ENCODE measurements at regions of chr6 and their contacts with region 1.

Region 1: DNA sequence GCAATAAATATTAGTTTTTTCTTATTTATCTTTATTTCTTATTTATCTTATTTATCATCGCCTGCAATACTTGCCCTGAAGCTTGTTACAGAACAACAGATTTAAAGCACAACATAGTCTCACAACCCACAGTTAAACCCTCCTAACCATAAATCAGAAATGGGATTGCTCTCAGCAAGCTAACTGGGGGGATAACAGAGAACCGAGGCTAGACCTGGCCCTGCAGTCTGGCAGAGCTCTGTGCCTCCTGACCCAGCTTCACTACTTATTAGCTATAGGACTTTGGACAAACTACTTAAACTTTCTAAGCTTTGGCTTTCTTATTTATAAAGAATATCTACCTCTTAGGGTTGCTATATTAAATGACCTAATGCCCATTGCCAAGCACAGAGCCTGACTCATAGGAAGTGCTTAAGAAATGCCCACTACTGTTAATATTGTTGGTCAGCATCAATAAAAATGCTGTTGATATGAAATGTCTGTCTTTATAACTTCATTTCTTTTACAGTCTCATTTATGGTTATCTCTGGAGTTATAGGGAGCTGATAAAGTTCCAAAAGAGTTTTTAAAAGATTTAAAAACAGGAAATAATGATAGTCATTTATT is 87.9 kb upstream of the BEND6 start:
- DNase-seq: no peak
- H3K4me3 Mint-ChIP-seq: no peak overlapping the region
- H3K27ac Mint-ChIP-seq: peak overlapping the region; percentile 64
- H3K4me1 Mint-ChIP-seq: peaks cover 68% of the 10 kb centered on the region
- H3K27me3 Mint-ChIP-seq: no peaks in the 10 kb centered on the region
- CTCF ChIP-seq: no peak

Region 2: GRCh38 chr6:56851541-56852259 is 15.3 kb before region 1 on chr6:
- CTCF ChIA-PET with region 1: interaction called, 11 read pairs
- intact Hi-C with region 1: no loop called
- DNase-seq: peak; percentile 70
- H3K4me3 Mint-ChIP-seq: peak overlapping the region; percentile 97
- H3K27ac Mint-ChIP-seq: peak overlapping the region; percentile 91
- H3K4me1 Mint-ChIP-seq: peaks cover 43% of the 10 kb centered on the region
- H3K27me3 Mint-ChIP-seq: no peaks in the 10 kb centered on the region
- CTCF ChIP-seq: peak; percentile 39

Region 3: GRCh38 chr6:56927538-56928453 is 60.8 kb after region 1 on chr6:
- CTCF ChIA-PET with region 1: no interaction called
- intact Hi-C with region 1: no loop called
- DNase-seq: no peak
- H3K4me3 Mint-ChIP-seq: no peak overlapping the region
- H3K27ac Mint-ChIP-seq: no peak overlapping the region
- H3K4me1 Mint-ChIP-seq: peaks cover 23% of the 10 kb centered on the region
- H3K27me3 Mint-ChIP-seq: no peaks in the 10 kb centered on the region
- CTCF ChIP-seq: no peak

Measured in Calu3 (cell line).